ENCODE measurements at regions of chr14 and their contacts with region 1.

Region 1: DNA sequence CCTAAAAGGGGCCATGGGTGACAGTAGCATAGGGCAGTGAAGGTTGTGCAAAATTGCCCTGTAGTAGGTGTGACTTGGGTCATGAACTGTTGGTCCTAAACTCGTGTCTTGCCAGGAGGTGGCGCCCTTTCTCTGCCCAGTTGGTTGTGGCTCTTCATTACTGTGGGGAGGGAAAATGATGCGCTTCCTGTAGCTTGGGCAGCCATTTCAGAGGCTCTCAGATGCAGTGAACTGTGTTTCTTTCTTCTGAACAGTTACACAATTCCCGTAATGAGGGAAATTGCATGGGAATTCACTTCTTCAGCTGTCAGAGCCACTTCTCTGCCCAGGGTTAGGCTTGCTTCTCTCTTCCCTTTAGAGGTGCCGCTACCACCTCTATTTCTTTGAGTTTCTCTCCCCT is 148.1 kb upstream of the NRXN3 start:
- DNase-seq: peak; percentile 22 to 65 (median 36)
- ATAC-seq: peak in 3 of 4 donors; percentile 49 to 68 (median 62)
- H3K4me3 ChIP-seq: no peak overlapping the region
- H3K27ac ChIP-seq: no peak overlapping the region
- H3K4me1 ChIP-seq: no peaks in the 10 kb centered on the region
- H3K27me3 ChIP-seq: peaks cover 0 to 5% (median 0%) of the 10 kb centered on the region in 9 donors
- CTCF ChIP-seq: peak; percentile 23 to 63 (median 46)
- POLR2A ChIP-seq: no peak

Region 2: GRCh38 chr14:76997256-76997970 is 1024.6 kb before region 1 on chr14:
- intact Hi-C with region 1: no loop called
- DNase-seq: no peak
- ATAC-seq: no peak
- H3K4me3 ChIP-seq: no peak overlapping the region
- H3K27ac ChIP-seq: no peak overlapping the region
- H3K4me1 ChIP-seq: peaks cover 0 to 15% (median 10%) of the 10 kb centered on the region in 12 donors
- H3K27me3 ChIP-seq: no peaks in the 10 kb centered on the region
- CTCF ChIP-seq: no peak
- POLR2A ChIP-seq: no peak

Region 3: GRCh38 chr14:78135450-78135891 is 113.4 kb after region 1 on chr14:
- intact Hi-C with region 1: no loop called
- DNase-seq: no peak
- ATAC-seq: no peak
- H3K4me3 ChIP-seq: no peak overlapping the region
- H3K27ac ChIP-seq: no peak overlapping the region
- H3K4me1 ChIP-seq: no peaks in the 10 kb centered on the region
- H3K27me3 ChIP-seq: peaks cover 0 to 7% (median 0%) of the 10 kb centered on the region in 9 donors
- CTCF ChIP-seq: no peak
- POLR2A ChIP-seq: no peak

Region 4: GRCh38 chr14:78157494-78158456 is 135.7 kb after region 1 on chr14:
- intact Hi-C with region 1: loop called in 1 of 10 experiments (anchors 10 kb)
- DNase-seq: peak in 1 of 5 donors; percentile 32
- ATAC-seq: peak in 1 of 4 donors; percentile 59
- H3K4me3 ChIP-seq: no peak overlapping the region
- H3K27ac ChIP-seq: no peak overlapping the region
- H3K4me1 ChIP-seq: no peaks in the 10 kb centered on the region
- H3K27me3 ChIP-seq: peaks cover 0 to 7% (median 0%) of the 10 kb centered on the region in 9 donors
- CTCF ChIP-seq: no peak
- POLR2A ChIP-seq: no peak

Region 5: GRCh38 chr14:78425330-78425729 is 403.3 kb after region 1 on chr14:
- intact Hi-C with region 1: no loop called
- DNase-seq: no peak
- ATAC-seq: no peak
- H3K4me3 ChIP-seq: no peak overlapping the region
- H3K27ac ChIP-seq: no peak overlapping the region
- H3K4me1 ChIP-seq: peaks cover 0 to 7% (median 0%) of the 10 kb centered on the region in 12 donors
- H3K27me3 ChIP-seq: no peaks in the 10 kb centered on the region
- CTCF ChIP-seq: no peak
- POLR2A ChIP-seq: no peak

Region 6: DNA sequence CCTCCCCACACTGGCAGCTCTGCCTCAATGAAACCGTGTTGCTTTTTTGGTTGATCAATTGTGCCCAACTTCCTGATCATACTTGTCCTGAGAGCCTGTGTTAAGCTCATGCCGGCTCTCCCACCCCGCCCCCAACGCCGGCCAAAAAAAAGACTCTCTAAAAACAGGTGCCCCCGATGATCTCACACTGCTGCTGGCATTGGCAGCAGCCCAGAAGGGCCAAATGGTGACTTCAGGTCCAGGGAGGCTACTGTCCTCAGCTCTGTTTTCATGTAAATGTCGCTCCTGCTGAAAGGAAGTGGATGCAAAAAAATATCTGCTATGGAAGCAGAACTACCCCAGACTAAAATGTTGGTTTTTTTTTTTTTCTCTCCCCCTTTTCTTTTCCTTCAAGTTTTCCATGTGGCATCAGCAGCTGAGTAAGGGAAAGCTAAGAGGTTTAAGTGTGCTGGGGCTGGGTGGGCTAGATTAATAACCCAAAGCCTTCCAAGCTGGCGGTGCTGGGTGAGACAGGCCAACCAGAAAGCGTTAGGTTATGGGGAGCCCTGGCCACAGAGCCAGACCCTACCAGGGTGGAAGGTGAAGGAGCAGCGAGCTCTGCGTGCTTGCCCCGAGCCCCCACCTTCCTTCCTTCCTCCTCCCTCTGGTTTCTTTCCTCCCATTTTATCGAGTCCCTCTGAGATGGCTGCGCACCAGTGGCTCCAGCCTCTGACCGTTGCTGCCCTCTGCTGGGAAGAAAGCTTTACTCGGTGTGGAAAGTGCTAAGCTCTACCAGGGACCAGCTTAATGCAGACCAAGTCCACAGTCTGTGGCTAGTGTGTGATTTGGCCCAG is 544.2 kb after region 1 on chr14:
- intact Hi-C with region 1: loop called in 9 of 10 experiments (anchors 2 to 10 kb)
- DNase-seq: peak; percentile 57 to 75 (median 73)
- ATAC-seq: peak; percentile 90 to 97 (median 94)
- H3K4me3 ChIP-seq: peak overlapping the region in 10 of 12 donors; percentile 15 to 59 (median 33)
- H3K27ac ChIP-seq: peak overlapping the region in 1 of 12 donors; percentile 39
- H3K4me1 ChIP-seq: peaks cover 0 to 8% (median 0%) of the 10 kb centered on the region in 12 donors
- H3K27me3 ChIP-seq: peaks cover 0 to 2% (median 0%) of the 10 kb centered on the region in 9 donors
- CTCF ChIP-seq: peak; percentile 58 to 86 (median 74)
- POLR2A ChIP-seq: no peak

Region 7: DNA sequence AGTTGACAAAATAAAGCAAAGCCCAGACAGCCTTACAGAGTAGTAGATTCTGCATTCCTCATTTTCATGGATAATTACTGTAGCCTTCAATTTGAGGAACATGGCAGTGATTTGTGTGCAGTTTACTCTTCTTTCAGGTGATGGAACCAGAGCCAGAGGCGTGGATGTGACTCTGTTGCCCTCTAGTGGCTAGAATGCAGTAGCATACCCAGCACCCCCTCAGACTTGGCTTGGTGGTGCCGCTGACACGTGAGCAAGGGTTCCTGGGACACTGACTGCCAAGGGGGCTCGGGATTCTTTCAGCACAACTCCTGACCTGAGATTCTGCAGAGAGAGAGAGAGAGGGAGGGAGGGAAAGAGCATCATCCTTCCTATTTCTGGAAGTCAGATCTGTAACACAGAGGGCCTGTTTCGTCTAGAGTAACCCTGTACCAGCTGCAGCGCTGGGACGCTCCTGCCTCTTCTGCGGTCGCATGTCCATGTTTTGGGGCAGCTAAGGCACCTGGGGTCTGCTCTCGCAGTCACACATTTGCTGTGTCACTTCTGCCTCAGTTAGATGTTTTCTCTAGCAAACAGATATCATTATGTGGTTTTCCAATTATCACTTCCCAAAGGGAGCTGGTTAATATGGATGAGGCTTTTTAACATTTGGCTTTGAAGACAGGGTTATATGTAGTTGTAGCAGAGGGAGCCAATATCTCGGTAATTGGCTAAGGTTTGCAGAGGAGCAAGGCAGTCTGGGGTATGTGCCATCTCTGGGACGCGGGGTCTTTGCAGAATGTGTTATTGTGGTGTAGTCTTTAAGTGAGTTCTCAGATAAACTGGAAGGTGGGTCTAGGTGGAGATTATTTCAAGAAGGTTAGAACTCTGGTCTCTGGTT is 576.2 kb after region 1 on chr14:
- intact Hi-C with region 1: loop called in 1 of 10 experiments (anchors 5 kb)
- DNase-seq: peak in 4 of 5 donors; percentile 24 to 42 (median 34)
- ATAC-seq: peak; percentile 51 to 89 (median 87)
- H3K4me3 ChIP-seq: no peak overlapping the region
- H3K27ac ChIP-seq: no peak overlapping the region
- H3K4me1 ChIP-seq: peaks cover 0 to 4% (median 0%) of the 10 kb centered on the region in 12 donors
- H3K27me3 ChIP-seq: no peaks in the 10 kb centered on the region
- CTCF ChIP-seq: peak; percentile 73 to 92 (median 84)
- POLR2A ChIP-seq: no peak

Measured in heart left ventricle (tissue), 16 donors.